GM13977 (cell line): ENCODE measurements at regions of chr18 and their contacts with region 1.

Region 1: GRCh38 chr18:77127769-77128671 is 4.6 kb downstream of the MBP start:
- DNase-seq: peak; percentile 55
- CTCF ChIP-seq: no peak

Region 2: GRCh38 chr18:76982841-76983587 is 145.0 kb before region 1 on chr18:
- in situ Hi-C with region 1: no loop called
- DNase-seq: peak; percentile 93
- CTCF ChIP-seq: peak; percentile 89

Region 3: GRCh38 chr18:77067291-77068061 is 60.5 kb before region 1 on chr18:
- in situ Hi-C with region 1: loop called (anchors 10 kb)
- DNase-seq: no peak
- CTCF ChIP-seq: no peak